ENCODE measurements at regions of chr3 and their contacts with region 1.

Region 1: DNA sequence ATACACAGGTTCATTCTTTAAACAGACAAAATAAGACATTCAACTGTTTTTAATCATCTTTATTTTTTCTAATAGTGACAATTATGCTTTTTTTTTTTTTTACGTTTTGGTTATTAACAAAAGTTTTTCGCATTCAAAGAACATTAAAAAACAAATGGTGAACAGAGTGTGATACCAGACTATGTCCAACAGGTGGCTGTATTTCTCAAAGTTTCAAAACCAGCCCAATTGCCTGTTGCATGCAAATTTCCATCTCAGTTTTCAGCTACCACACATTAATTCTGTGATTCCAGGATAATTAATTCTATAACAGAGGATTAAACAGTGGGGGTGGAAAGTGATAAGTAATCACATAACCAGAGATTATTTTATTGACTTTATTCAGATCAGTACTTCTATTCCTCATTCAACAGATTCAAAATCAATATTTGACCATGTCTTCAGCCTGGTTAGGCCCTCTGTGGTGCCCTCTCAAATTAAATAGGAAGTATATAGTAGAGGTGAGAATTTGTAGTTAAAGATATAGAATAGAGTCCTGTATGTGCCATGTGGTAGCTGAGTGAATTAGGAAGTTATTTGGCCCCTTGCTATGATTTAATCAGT is 122.2 kb upstream of the DCBLD2 start:
- DNase-seq: peak in 1 of 7 donors; percentile 17
- H3K4me3 ChIP-seq: no peak overlapping the region
- H3K27ac ChIP-seq: no peak overlapping the region
- H3K4me1 ChIP-seq: no peaks in the 10 kb centered on the region
- H3K27me3 ChIP-seq: no peaks in the 10 kb centered on the region
- CTCF ChIP-seq: peak; percentile 44 to 72 (median 68)
- POLR2A ChIP-seq: no peak

Region 2: DNA sequence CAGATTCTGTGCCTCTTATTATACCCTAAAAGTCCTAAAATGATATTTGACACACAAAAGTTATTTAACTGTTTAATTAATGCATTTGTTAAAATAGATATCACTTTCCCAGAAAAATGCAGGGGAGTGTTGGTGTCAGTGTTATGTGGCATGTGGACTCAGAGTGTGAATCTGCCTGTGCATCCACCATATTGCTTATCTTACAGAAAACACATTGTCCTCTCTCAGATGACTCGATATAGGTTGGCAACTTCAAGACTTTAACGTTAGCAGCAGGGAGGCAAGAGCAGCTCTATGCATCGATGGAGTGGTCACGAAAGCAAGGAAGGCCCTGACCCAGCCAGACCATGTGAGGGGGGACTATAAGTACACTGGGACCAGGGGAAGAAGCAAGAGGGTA is 43.2 kb after region 1 on chr3:
- intact Hi-C with region 1: no loop called
- DNase-seq: no peak
- H3K4me3 ChIP-seq: no peak overlapping the region
- H3K27ac ChIP-seq: no peak overlapping the region
- H3K4me1 ChIP-seq: no peaks in the 10 kb centered on the region
- H3K27me3 ChIP-seq: no peaks in the 10 kb centered on the region
- CTCF ChIP-seq: no peak
- POLR2A ChIP-seq: no peak

Region 3: DNA sequence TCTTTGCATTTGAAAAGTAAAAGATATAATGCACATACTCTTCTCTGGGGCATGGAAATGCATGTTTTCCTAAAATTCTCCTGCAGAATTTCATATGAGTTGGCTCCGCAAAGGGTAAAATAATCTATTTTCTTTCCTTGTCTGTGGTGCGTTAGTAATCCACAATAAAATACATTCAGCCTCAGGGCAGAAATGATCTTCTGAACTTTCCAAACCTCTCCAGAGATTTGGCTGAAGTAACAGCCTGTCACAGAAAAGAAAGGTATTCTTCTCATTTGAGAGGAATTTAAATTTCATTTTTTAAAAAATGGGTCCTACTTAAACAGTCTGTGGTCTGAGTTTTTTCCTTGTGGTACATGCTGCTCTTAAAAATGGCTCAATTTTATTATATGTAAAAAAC is 60.5 kb after region 1 on chr3:
- intact Hi-C with region 1: no loop called
- DNase-seq: no peak
- H3K4me3 ChIP-seq: no peak overlapping the region
- H3K27ac ChIP-seq: no peak overlapping the region
- H3K4me1 ChIP-seq: no peaks in the 10 kb centered on the region
- H3K27me3 ChIP-seq: no peaks in the 10 kb centered on the region
- CTCF ChIP-seq: no peak
- POLR2A ChIP-seq: no peak

Region 4: GRCh38 chr3:99159220-99159762 is 135.6 kb after region 1 on chr3:
- intact Hi-C with region 1: no loop called
- DNase-seq: no peak
- H3K4me3 ChIP-seq: no peak overlapping the region
- H3K27ac ChIP-seq: no peak overlapping the region
- H3K4me1 ChIP-seq: no peaks in the 10 kb centered on the region
- H3K27me3 ChIP-seq: no peaks in the 10 kb centered on the region
- CTCF ChIP-seq: no peak
- POLR2A ChIP-seq: no peak

Region 5: GRCh38 chr3:99172736-99173657 is 149.3 kb after region 1 on chr3:
- intact Hi-C with region 1: loop called (anchors 5 to 10 kb)
- DNase-seq: peak; percentile 62 to 84 (median 65)
- H3K4me3 ChIP-seq: no peak overlapping the region
- H3K27ac ChIP-seq: no peak overlapping the region
- H3K4me1 ChIP-seq: no peaks in the 10 kb centered on the region
- H3K27me3 ChIP-seq: no peaks in the 10 kb centered on the region
- CTCF ChIP-seq: peak; percentile 59 to 74 (median 70)
- POLR2A ChIP-seq: no peak

Region 6: GRCh38 chr3:99753268-99753975 is 729.7 kb after region 1 on chr3:
- intact Hi-C with region 1: loop called in 1 of 2 experiments (anchors 5 kb)
- DNase-seq: peak in 3 of 7 donors; percentile 9 to 17 (median 10)
- H3K4me3 ChIP-seq: no peak overlapping the region
- H3K27ac ChIP-seq: no peak overlapping the region
- H3K4me1 ChIP-seq: no peaks in the 10 kb centered on the region
- H3K27me3 ChIP-seq: peaks cover 9% of the 10 kb centered on the region
- CTCF ChIP-seq: peak; percentile 40 to 72 (median 59)
- POLR2A ChIP-seq: no peak